Activated CD4-positive, alpha-beta memory T cell treated with anti-CD3 and anti-CD28 coated beads, Interleukin-2, amount 10 ng/mL, durations not matched to agents 7 days and 5 days (primary cell): ENCODE measurements at regions of chr4 and their contacts with region 1.

Region 1: DNA sequence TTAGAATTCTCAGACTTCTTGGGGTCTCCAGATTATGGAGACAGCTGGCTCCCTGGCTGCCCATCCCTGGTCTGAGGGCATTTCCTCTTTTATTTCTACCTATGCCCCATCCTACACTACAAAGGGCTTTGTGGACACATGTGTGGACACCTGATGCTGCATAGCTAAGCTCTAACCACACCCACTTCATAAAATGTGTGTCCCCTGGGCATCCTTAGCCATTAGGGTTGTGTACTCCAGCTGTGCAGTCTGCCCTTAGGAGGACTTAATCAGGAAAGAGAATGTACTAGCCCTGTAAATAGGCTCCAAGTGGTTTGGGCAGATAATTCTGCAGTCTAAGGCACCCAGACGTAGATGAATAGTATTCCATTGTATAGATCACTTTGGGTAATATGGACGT is 47.0 kb downstream of the COQ2 start:
- DNase-seq: no peak
- H3K4me3 Mint-ChIP-seq: no peak overlapping the region
- H3K27ac Mint-ChIP-seq: no peak overlapping the region
- H3K4me1 Mint-ChIP-seq: peaks cover 39% of the 10 kb centered on the region
- H3K27me3 Mint-ChIP-seq: peaks cover 75% of the 10 kb centered on the region

Region 2: DNA sequence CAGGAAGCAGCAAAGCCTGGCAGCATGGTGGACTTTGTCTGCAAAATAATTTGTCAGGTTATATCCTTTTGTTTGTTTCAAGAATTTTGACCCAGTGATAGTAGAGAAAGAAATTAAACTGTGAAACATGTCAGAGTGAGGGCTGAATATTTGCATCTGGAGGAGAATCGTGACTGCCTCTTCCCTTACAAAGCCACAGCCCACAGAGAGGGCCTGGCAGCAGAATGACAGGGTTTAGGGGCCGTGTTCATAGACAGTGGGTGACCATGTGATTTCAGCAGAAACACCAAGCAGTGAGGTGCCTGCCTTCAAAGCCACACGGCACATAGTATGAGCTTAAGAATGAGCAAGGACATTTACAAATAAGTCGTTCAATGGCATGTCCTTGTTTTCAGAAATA is 98.6 kb before region 1 on chr4:
- CTCF ChIA-PET with region 1: no interaction called
- POLR2A ChIA-PET with region 1: no interaction called
- DNase-seq: peak; percentile 37
- H3K4me3 Mint-ChIP-seq: no peak overlapping the region
- H3K27ac Mint-ChIP-seq: peak overlapping the region; percentile 45
- H3K4me1 Mint-ChIP-seq: peaks cover 21% of the 10 kb centered on the region
- H3K27me3 Mint-ChIP-seq: peaks cover 9% of the 10 kb centered on the region

Region 3: DNA sequence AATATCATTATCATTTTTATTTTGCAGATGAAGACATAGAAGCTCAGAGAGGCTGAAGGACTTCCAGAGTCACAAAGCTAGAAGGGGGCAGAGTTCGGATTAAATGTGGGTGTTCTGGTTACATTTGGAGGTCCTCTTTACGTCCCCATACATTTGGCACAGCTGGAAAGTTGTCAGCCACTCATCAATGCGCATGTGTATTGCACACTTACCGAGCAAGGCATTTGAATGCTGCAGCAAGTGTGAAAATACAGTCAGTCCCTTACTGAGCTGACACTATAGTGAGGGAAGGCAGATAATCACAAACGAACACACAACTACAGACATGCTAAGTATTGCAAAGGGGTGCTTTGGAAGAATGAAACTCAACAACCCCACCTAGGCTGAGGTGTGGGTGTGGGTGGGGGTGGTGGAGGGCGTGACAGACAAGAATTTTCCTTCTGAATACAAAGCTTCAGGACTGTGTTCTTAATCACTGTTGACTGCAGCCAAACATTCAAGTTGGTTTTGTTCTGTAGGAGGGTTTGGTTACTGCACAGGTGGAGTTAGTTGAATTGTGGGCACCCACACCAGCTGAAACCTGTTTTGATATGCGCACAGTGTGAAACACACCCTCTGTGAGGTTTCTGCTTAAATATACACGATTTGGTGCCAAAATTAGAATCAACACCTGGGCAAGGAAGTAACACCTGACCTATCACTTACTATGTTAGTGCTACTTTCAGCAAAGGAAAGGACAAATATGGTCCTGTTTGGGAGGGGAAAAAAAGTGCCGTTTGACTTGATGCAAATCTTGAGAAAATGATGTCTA is 25.3 kb before region 1 on chr4:
- CTCF ChIA-PET with region 1: interaction called, 11 read pairs
- POLR2A ChIA-PET with region 1: interaction called, 41 read pairs
- DNase-seq: peak; percentile 74
- H3K4me3 Mint-ChIP-seq: peak overlapping the region; percentile 40
- H3K27ac Mint-ChIP-seq: peak overlapping the region; percentile 89
- H3K4me1 Mint-ChIP-seq: peaks cover 66% of the 10 kb centered on the region
- H3K27me3 Mint-ChIP-seq: peaks cover 41% of the 10 kb centered on the region

Region 4: GRCh38 chr4:83252782-83253405 is 15.3 kb after region 1 on chr4:
- CTCF ChIA-PET with region 1: interaction called, 38 read pairs
- POLR2A ChIA-PET with region 1: interaction called, 13 read pairs
- DNase-seq: peak; percentile 77
- H3K4me3 Mint-ChIP-seq: no peak overlapping the region
- H3K27ac Mint-ChIP-seq: no peak overlapping the region
- H3K4me1 Mint-ChIP-seq: peaks cover 21% of the 10 kb centered on the region
- H3K27me3 Mint-ChIP-seq: peaks cover 16% of the 10 kb centered on the region